Posterior cingulate gyrus (tissue), 11 donors: ENCODE measurements at regions of chr1 and their contacts with region 1.

Region 1: DNA sequence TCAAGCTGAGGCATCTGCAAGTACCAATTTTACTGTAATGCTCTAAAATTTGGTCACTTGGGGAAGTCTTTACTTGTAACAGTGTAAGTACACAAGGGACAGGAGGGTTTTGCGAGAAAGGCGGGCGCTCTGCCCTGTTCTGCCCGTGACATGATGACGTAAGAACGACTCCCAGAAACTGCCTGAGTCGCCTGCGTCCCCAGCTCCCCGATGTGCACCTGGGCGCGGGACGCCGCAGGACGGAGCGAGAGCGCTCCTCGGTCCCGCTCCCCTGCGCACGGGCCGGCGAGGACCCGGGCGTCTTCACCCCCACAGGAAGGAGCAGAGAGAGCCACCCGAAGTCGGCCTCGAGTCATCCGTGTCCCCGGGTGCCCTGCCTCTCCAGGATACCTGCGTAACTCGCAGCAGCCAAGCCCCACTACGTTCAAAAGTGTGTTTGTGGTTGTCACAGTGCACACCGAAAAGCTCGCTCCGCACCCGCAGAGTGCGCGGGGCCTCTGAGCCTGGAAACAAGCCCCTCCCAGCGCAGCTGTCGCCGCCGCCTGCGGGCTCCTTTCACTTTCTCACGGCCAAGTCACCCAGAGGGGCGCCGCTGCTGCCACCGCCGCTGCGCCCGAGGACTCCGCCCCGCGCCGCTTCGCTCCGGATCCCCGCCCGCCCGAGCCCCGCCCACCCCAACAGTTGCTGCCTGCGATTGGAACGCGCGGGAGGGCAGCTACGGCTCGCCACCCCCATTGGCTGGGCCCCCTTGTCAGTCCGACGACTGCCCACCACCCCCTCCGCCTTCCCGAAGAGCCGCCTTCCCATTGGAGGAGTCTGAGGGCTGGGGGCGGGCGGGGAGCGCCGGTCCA is 3.2 kb upstream of the ZBTB18 start:
- DNase-seq: peak; percentile 96 to 100 (median 99)

Region 2: DNA sequence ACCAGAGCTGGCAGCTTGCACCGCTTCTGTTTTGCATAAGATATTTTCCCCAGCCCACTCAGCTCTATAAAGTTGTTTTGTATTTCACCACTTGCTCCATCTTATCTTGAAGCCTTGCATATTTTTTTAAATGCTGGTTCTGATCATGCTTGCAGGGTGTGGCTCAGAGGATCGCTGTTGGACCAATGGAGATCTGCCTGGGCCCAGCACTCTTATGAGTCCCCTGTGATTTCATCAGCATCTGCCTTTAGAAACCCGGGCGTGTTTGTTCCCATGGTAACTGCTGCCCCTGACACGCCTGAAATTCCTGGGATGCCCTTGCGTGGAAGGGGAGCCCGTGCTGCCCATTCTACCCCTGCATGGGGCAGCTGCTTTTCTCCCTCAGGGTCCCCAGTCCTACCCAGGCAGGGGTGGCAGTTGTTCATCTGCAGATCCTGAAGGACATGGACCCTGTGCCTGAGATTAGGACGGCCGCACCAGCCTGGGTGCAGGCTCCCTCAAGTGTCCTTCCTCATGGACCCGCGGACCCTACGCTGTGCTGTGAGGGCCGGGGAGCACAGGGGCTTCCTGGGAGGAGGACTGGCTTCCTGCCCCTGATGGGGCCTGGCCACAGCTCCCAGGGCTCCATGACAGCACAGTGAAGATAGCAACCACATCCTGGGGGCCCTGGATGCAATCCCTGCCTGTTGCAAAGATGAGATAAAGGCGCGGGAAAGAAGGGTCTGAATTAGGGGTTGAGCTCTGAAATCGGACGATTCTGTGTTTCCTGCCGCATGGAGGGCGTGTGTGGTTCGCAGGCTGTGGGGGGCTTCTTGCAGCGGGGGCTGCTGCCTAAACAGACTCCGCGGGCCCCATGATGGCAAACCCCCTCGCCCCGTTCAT is 565.5 kb before region 1 on chr1:
- intact Hi-C with region 1: loop called (anchors 2 kb)
- DNase-seq: peak in 4 of 10 donors; percentile 45 to 94 (median 75)

Region 3: DNA sequence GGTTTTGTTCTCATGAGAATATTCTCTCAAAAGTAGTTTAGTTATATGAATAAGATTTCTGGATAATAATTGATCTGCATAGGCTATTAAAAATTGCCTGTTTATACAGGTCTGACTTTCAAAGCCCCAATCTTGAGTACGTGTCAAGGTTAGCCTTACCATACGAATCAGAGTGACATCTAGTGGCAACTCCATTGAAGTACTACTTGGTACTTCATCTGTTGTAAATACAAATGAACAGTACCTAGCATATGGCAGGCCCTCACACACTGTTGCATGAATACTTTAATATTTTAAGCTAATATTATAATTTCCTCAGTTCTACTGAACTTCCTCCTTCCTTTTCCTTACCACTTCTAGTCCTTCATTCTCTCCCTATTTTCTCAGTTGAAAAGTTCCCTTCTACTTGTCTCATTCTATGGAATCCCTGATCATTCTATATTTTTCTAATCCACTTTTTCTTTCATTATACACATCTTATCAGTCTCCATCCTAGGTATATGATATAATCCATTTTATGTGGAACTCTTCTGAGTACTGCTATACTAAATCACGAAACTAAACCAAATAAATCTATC is 299.1 kb before region 1 on chr1:
- intact Hi-C with region 1: loop called (anchors 10 kb)
- DNase-seq: no peak

Region 4: DNA sequence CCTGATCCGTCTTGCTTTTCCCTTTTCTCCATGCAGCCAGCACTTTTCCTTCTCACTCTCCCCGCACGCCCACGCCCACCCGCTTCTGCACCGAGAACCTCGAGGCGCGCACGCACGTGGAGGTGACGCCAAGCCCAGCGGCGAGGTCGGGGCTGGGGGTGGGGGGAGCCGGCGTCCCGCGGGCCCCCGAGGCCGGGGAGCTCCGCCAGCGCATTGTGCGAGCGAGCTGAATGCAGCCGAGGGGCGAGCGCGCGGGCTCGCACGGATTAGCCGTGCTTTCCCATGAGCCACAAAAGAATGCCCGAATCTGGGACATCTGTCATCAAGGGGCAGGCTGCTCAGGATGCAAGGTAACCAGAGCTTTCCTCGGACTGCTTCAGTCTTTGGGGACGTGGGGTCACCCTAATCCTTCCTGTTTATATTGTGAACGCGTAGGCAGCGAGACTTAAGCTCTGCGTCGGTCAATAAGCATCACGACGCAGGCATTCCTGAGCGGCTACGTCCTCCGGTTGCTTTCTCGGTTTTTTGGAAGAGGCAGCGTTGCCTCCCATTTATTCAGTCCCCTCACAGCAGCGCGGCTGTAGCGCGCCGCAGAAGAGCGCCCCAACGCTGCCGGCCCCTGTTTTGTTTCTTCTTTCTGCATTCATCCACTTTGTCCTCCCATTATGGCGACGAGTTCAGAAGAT is 130.5 kb before region 1 on chr1:
- intact Hi-C with region 1: loop called (anchors 10 kb)
- DNase-seq: peak in 9 of 10 donors; percentile 39 to 92 (median 59)

Region 5: GRCh38 chr1:244092293-244092963 is 44.6 kb after region 1 on chr1:
- intact Hi-C with region 1: no loop called
- DNase-seq: no peak

Region 6: GRCh38 chr1:244214009-244214967 is 166.4 kb after region 1 on chr1:
- intact Hi-C with region 1: loop called (anchors 5 kb)
- DNase-seq: no peak